CD8-positive, alpha-beta T cell (primary cell): ENCODE measurements at regions of chr17 and their contacts with region 1.

Region 1: GRCh38 chr17:69567130-69567529 is 152.6 kb downstream of the MAP2K6 start:
- DNase-seq: no peak
- ATAC-seq: no peak
- H3K4me3 ChIP-seq: no peak overlapping the region
- H3K4me3 Mint-ChIP-seq: no peak overlapping the region
- H3K27ac ChIP-seq: no peak overlapping the region
- H3K27ac Mint-ChIP-seq: no peak overlapping the region
- H3K4me1 ChIP-seq: no peaks in the 10 kb centered on the region
- H3K4me1 Mint-ChIP-seq: peaks cover 3% of the 10 kb centered on the region
- H3K27me3 ChIP-seq: no peaks in the 10 kb centered on the region
- H3K27me3 Mint-ChIP-seq: peaks cover 6% of the 10 kb centered on the region
- CTCF ChIP-seq: no peak

Region 2: DNA sequence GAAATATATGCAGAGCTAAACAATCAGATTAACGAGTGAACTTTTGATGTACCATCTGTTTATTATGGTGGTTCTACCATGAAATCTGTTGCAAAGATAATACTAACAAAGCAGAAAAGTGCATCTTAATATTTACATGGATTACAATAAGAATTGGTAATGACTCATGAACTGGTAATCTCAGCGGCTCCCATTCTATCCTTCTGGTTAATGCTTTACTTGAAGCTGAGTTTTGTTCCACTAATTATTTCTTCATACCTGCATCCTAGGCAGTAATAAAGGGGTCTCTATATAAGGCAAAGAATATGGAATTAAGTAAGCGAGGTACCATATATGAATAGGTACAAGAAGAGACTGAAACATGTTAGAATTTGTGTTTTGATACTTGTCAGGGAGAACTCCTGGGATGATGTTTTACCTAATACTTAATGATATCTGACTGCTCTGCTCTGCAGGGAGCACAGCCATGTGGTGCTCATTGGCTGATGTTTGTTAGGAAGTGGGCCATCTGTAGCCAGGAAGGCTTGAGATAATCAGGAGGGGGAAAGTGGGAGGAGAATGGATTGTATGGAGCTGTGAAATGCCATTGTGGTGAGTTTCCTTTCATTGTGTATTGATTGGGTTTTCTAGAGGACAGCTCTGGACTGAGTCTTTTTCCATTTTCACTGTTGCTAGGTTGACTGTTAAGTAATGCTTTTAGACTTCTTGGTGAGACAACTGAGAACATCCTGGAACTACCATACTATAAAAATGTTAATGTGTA is 100.0 kb before region 1 on chr17:
- CTCF ChIA-PET with region 1: no interaction called
- POLR2A ChIA-PET with region 1: no interaction called
- intact Hi-C with region 1: no loop called
- DNase-seq: no peak
- ATAC-seq: no peak
- H3K4me3 ChIP-seq: no peak overlapping the region
- H3K4me3 Mint-ChIP-seq: no peak overlapping the region
- H3K27ac ChIP-seq: no peak overlapping the region
- H3K27ac Mint-ChIP-seq: no peak overlapping the region
- H3K4me1 ChIP-seq: no peaks in the 10 kb centered on the region
- H3K4me1 Mint-ChIP-seq: peaks cover 12% of the 10 kb centered on the region
- H3K27me3 ChIP-seq: no peaks in the 10 kb centered on the region
- H3K27me3 Mint-ChIP-seq: no peaks in the 10 kb centered on the region
- CTCF ChIP-seq: no peak

Region 3: DNA sequence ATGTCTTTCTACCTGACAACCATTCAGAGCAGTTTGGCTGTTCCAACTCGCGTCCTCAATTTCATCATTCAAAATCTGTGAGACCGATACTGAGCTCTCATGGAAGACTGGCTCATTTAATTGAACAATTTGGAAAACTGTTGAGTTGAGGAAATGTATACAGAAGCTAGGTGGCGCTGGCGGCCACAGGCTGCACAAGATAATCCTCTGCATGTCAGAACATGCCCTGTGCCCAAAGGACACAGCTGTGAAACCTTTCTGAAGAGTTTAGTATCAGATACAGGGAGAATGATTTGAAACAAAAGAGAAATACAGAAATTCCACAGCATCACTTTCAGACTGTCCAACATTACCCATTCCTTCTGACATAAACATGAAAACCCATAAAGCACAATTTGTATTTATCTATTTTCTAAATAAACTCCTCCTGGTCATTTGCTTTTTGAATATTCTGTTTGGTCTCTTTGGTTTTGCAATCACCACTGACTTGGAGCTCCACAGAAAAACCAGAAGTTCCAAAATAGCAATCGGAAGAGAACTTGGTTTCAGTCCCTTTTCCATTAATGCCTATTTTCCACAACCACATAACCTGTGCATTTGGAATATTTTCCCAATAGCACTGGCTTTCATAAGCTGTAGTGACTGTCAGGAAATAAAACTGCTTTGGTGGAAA is 40.2 kb after region 1 on chr17:
- CTCF ChIA-PET with region 1: no interaction called
- POLR2A ChIA-PET with region 1: no interaction called
- intact Hi-C with region 1: no loop called
- DNase-seq: peak in 2 of 9 experiments; percentile 11 to 15
- ATAC-seq: no peak
- H3K4me3 ChIP-seq: no peak overlapping the region
- H3K4me3 Mint-ChIP-seq: no peak overlapping the region
- H3K27ac ChIP-seq: no peak overlapping the region
- H3K27ac Mint-ChIP-seq: no peak overlapping the region
- H3K4me1 ChIP-seq: peaks cover 11% of the 10 kb centered on the region
- H3K4me1 Mint-ChIP-seq: peaks cover 13% of the 10 kb centered on the region
- H3K27me3 ChIP-seq: no peaks in the 10 kb centered on the region
- H3K27me3 Mint-ChIP-seq: no peaks in the 10 kb centered on the region
- CTCF ChIP-seq: peak; percentile 37

Region 4: DNA sequence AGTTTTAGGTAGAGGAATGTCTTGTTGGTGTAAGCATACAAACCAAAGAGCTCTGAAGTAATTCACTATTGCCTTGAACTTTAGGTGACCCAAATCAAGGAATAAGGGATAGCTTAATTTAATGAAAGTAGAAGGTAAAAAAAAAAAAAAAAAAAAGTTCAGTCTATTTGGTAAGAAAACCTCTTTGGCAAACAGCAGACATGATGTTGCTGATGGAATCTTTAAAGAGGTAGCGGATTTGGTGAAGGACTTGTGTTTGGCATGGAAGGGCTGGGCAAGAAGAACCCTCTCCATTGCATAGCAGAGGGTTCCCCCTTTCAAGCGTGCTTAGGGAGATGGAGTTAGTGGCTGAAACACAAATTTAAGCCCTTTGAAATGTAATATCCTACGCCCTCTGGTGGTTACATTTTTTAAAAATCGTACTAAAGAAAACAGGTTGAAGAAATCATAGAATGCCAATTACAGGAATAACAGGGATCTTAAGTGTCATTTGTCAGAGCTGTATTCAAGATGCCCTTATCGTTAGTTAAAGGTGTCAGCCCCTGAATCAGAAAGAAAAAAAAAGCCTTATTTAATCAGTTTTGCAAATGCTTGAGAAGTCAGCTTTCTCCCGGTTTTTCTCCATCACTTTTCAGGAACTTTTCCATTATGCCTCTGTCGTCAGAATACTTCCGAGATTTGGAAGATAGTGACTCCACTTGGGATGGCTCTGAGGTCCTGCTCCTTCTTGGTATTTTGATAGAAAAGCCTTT is 985.3 kb after region 1 on chr17:
- CTCF ChIA-PET with region 1: interaction called, 5 read pairs
- POLR2A ChIA-PET with region 1: no interaction called
- intact Hi-C with region 1: loop called in 1 of 2 experiments (anchors 5 kb)
- DNase-seq: peak in 2 of 9 experiments; percentile 0 to 20
- ATAC-seq: no peak
- H3K4me3 ChIP-seq: no peak overlapping the region
- H3K4me3 Mint-ChIP-seq: no peak overlapping the region
- H3K27ac ChIP-seq: no peak overlapping the region
- H3K27ac Mint-ChIP-seq: no peak overlapping the region
- H3K4me1 ChIP-seq: no peaks in the 10 kb centered on the region
- H3K4me1 Mint-ChIP-seq: no peaks in the 10 kb centered on the region
- H3K27me3 ChIP-seq: no peaks in the 10 kb centered on the region
- H3K27me3 Mint-ChIP-seq: no peaks in the 10 kb centered on the region
- CTCF ChIP-seq: no peak

Region 5: DNA sequence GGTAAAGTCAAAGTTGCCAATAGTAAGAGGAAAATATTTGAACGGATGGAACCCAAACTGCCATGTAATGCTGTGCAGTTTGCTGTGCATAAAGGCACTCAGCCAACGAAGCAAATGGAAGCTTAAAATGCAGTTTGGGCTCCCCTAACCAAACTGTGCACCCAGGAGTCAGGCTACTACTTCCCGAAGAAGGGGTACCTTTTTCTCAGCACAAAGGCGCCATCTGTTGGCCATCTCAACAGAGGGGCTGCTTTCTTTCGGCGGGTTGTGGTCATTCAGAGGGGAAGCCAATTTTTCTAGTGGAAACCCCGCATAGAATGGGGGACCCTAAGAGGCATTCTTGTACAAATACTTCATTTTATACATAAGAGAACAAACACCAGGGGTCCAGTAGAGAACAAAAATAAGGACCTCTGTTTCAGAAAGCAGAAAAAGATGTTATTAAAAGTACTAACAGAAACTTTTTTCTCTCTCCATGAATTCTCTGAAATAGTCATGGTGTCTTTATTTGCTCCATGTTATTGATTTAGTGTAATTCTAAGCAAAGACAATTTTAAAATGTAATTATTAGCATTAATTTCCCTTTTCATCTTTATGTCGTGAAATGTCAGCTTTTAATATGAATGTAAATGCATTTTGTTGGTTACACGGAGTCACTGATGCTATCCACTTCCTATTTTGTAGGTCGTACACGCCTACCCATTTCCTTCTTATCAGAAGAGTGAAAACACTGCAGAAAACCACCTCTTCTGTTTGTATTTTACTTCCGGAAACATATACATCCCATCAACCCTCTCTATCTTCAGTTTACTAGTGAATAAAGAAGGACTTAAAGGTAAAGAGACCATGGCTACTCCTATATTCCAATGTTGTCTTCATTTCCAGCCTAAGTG is 1055.5 kb after region 1 on chr17:
- CTCF ChIA-PET with region 1: no interaction called
- POLR2A ChIA-PET with region 1: no interaction called
- intact Hi-C with region 1: loop called in 1 of 2 experiments (anchors 5 kb)
- DNase-seq: peak in 2 of 9 experiments; percentile 1 to 8
- ATAC-seq: no peak
- H3K4me3 ChIP-seq: no peak overlapping the region
- H3K4me3 Mint-ChIP-seq: no peak overlapping the region
- H3K27ac ChIP-seq: no peak overlapping the region
- H3K27ac Mint-ChIP-seq: no peak overlapping the region
- H3K4me1 ChIP-seq: no peaks in the 10 kb centered on the region
- H3K4me1 Mint-ChIP-seq: peaks cover 4% of the 10 kb centered on the region
- H3K27me3 ChIP-seq: no peaks in the 10 kb centered on the region
- H3K27me3 Mint-ChIP-seq: peaks cover 3% of the 10 kb centered on the region
- CTCF ChIP-seq: no peak

Region 6: GRCh38 chr17:70629902-70630301 is 1062.8 kb after region 1 on chr17:
- CTCF ChIA-PET with region 1: interaction called, 3 read pairs
- POLR2A ChIA-PET with region 1: no interaction called
- intact Hi-C with region 1: loop called in 1 of 2 experiments (anchors 5 kb)
- DNase-seq: peak in 1 of 9 experiments; percentile 4
- ATAC-seq: no peak
- H3K4me3 ChIP-seq: no peak overlapping the region
- H3K4me3 Mint-ChIP-seq: no peak overlapping the region
- H3K27ac ChIP-seq: no peak overlapping the region
- H3K27ac Mint-ChIP-seq: no peak overlapping the region
- H3K4me1 ChIP-seq: no peaks in the 10 kb centered on the region
- H3K4me1 Mint-ChIP-seq: no peaks in the 10 kb centered on the region
- H3K27me3 ChIP-seq: no peaks in the 10 kb centered on the region
- H3K27me3 Mint-ChIP-seq: no peaks in the 10 kb centered on the region
- CTCF ChIP-seq: no peak